CD8-positive, alpha-beta T cell (primary cell): ENCODE measurements at regions of chr12 and their contacts with region 1.

Region 1: DNA sequence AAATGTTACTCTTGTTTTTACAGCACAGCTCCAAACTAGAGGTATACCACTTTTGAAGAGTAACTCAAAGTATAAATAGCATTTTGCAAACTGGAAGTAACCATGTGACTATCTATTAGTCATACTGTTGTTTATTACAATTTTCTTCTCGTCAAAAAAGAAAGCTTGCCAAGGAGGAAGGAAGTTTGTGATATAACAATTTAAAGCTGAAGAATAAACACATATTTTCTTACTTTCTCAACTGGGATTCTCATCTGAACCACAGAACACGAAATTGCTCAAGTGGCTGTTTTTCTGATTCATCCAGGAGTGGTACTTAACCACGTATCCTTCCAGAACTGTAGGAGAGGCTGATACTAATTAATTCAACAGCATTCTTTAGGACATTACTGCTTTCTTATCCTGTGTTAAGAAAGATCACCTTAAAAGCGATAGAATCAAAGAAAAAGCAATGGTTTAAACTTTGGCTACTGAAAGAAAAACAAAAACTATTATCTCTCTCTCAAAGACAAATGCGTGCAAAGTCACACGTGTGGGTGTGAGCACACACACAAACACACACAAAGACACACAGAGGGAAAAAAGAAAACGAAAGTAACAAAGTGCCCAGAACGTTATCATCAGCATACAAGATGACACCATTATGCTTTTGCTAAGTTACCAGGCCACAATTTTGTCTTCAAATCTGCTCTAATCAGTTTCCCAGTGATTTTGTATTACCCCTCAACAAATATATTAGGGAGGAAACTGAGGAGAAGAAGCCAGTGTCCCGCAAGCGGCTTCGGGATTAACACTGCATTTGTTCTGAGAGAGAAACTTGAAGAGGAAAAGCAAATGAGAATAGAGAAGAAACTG is at the start of gene CLEC2B:
- DNase-seq: peak in 3 of 9 experiments; percentile 50 to 86 (median 71)
- ATAC-seq: peak; percentile 70
- H3K4me3 ChIP-seq: peak within 1 kb of the TSS; percentile 41 to 64
- H3K4me3 Mint-ChIP-seq: peak within 1 kb of the TSS; percentile 89
- H3K27ac ChIP-seq: peak within 1 kb of the TSS; percentile 79 to 92
- H3K27ac Mint-ChIP-seq: peak within 1 kb of the TSS; percentile 96
- H3K4me1 ChIP-seq: peaks cover 7% of the 10 kb centered on the region
- H3K4me1 Mint-ChIP-seq: peaks cover 36% of the 10 kb centered on the region
- H3K27me3 ChIP-seq: no peaks in the 10 kb centered on the region
- H3K27me3 Mint-ChIP-seq: no peaks in the 10 kb centered on the region
- CTCF ChIP-seq: no peak
- total RNA-seq, gene CLEC2B: 141 to 145 TPM

Region 2: DNA sequence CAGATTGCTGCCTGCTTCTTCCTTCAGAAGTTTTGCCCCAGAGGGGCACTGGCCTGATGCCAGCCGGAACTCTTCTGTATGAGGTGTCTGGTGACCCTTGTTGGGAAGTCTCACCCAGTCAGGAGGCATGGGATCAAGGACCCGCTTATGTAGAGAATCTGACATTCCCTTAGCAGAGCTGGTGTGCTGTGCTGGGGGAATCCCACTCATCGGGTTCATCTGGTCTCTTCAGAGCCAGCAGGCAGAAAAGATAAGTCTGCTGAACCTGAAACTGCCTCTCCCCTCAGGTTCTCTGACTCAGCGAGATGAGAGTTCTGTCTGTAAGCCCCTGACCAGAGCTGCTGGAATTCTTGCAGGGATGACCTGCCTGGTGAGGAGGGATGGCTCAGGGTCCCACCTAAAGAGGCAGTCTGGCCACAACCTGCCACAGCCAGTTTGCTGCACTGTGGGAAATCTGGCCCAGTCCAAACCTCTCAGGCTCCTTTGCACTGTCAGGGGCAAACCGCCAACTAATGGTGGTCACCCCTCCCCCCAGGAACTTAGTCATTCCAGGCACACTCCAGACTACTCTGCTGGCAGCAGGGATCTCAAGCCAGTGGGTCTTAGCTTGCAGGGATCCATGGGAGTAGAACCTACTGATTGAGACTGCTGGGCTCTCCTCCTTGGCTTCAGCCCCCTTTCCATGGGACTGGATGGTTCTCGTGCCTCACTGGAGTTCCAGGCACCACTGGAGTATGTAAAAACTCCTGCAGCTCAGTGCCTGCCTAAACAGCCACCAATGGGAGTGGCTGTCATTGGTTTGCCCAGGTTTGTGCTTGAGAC is 195.9 kb before region 1 on chr12:
- CTCF ChIA-PET with region 1: interaction called, 4 read pairs
- POLR2A ChIA-PET with region 1: interaction called, 3 read pairs
- intact Hi-C with region 1: loop called in 1 of 2 experiments (anchors 10 kb)
- DNase-seq: peak in 7 of 9 experiments; percentile 44 to 82 (median 63)
- ATAC-seq: peak; percentile 37
- H3K4me3 ChIP-seq: peak overlapping the region; percentile 50 to 68
- H3K4me3 Mint-ChIP-seq: peak overlapping the region; percentile 88
- H3K27ac ChIP-seq: peak overlapping the region; percentile 42 to 74
- H3K27ac Mint-ChIP-seq: peak overlapping the region; percentile 95
- H3K4me1 ChIP-seq: peaks cover 44% of the 10 kb centered on the region
- H3K4me1 Mint-ChIP-seq: peaks cover 76% of the 10 kb centered on the region
- H3K27me3 ChIP-seq: no peaks in the 10 kb centered on the region
- H3K27me3 Mint-ChIP-seq: no peaks in the 10 kb centered on the region
- CTCF ChIP-seq: no peak

Region 3: GRCh38 chr12:9851927-9852326 is 17.6 kb before region 1 on chr12:
- CTCF ChIA-PET with region 1: interaction called, 4 read pairs
- POLR2A ChIA-PET with region 1: interaction called, 4 read pairs
- intact Hi-C with region 1: loop called in 1 of 2 experiments (anchors 2 kb)
- DNase-seq: no peak
- ATAC-seq: no peak
- H3K4me3 ChIP-seq: no peak overlapping the region
- H3K4me3 Mint-ChIP-seq: no peak overlapping the region
- H3K27ac ChIP-seq: no peak overlapping the region
- H3K27ac Mint-ChIP-seq: no peak overlapping the region
- H3K4me1 ChIP-seq: peaks cover 11% of the 10 kb centered on the region
- H3K4me1 Mint-ChIP-seq: peaks cover 50% of the 10 kb centered on the region
- H3K27me3 ChIP-seq: no peaks in the 10 kb centered on the region
- H3K27me3 Mint-ChIP-seq: no peaks in the 10 kb centered on the region
- CTCF ChIP-seq: no peak

Region 4: GRCh38 chr12:9858135-9858534 is 11.4 kb before region 1 on chr12:
- CTCF ChIA-PET with region 1: interaction called, 4 read pairs
- POLR2A ChIA-PET with region 1: interaction called, 4 read pairs
- intact Hi-C with region 1: loop called in 1 of 2 experiments (anchors 1 kb)
- DNase-seq: no peak
- ATAC-seq: no peak
- H3K4me3 ChIP-seq: no peak overlapping the region
- H3K4me3 Mint-ChIP-seq: no peak overlapping the region
- H3K27ac ChIP-seq: no peak overlapping the region
- H3K27ac Mint-ChIP-seq: no peak overlapping the region
- H3K4me1 ChIP-seq: peaks cover 37% of the 10 kb centered on the region
- H3K4me1 Mint-ChIP-seq: peaks cover 84% of the 10 kb centered on the region
- H3K27me3 ChIP-seq: no peaks in the 10 kb centered on the region
- H3K27me3 Mint-ChIP-seq: no peaks in the 10 kb centered on the region
- CTCF ChIP-seq: no peak

Region 5: DNA sequence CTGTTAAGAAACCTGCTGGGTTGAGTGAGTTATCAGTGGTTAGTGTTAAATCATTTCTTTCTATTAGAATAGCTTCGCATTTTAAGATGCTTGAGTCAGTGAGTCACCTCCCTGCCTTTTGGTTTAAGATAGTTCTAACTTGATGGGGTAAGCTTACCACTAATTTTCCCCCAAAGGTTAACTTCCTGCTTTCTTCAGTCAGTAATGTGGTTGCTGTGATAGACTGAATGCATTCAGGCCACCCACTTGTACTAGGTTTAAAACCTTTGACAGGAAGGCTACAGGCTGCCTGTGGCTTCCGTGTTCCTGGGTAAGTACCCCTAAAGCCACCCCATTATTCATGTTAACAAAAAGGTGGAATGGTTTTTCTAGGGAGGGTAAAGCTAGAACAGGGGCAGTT is 37.3 kb after region 1 on chr12:
- CTCF ChIA-PET with region 1: interaction called, 5 read pairs
- POLR2A ChIA-PET with region 1: interaction called, 18 read pairs
- intact Hi-C with region 1: loop called (anchors 1 to 2 kb)
- DNase-seq: peak in 8 of 9 experiments; percentile 15 to 86 (median 59)
- ATAC-seq: peak; percentile 96
- H3K4me3 ChIP-seq: peak overlapping the region in 1 of 2 experiments; percentile 8
- H3K4me3 Mint-ChIP-seq: peak overlapping the region; percentile 49
- H3K27ac ChIP-seq: peak overlapping the region in 1 of 2 experiments; percentile 3
- H3K27ac Mint-ChIP-seq: peak overlapping the region; percentile 82
- H3K4me1 ChIP-seq: peaks cover 28% of the 10 kb centered on the region
- H3K4me1 Mint-ChIP-seq: peaks cover 36% of the 10 kb centered on the region
- H3K27me3 ChIP-seq: no peaks in the 10 kb centered on the region
- H3K27me3 Mint-ChIP-seq: no peaks in the 10 kb centered on the region
- CTCF ChIP-seq: no peak

Region 6: GRCh38 chr12:9925708-9926393 is 56.3 kb after region 1 on chr12:
- CTCF ChIA-PET with region 1: interaction called, 5 read pairs
- POLR2A ChIA-PET with region 1: interaction called, 3 read pairs
- intact Hi-C with region 1: loop called (anchors 2 kb)
- DNase-seq: peak in 6 of 9 experiments; percentile 5 to 74 (median 44)
- ATAC-seq: peak; percentile 59
- H3K4me3 ChIP-seq: peak overlapping the region; percentile 21 to 28
- H3K4me3 Mint-ChIP-seq: peak overlapping the region; percentile 77
- H3K27ac ChIP-seq: no peak overlapping the region
- H3K27ac Mint-ChIP-seq: peak overlapping the region; percentile 18
- H3K4me1 ChIP-seq: no peaks in the 10 kb centered on the region
- H3K4me1 Mint-ChIP-seq: peaks cover 12% of the 10 kb centered on the region
- H3K27me3 ChIP-seq: peaks cover 0 to 2% of the 10 kb centered on the region in 2 experiments
- H3K27me3 Mint-ChIP-seq: no peaks in the 10 kb centered on the region
- CTCF ChIP-seq: peak; percentile 62

Region 7: DNA sequence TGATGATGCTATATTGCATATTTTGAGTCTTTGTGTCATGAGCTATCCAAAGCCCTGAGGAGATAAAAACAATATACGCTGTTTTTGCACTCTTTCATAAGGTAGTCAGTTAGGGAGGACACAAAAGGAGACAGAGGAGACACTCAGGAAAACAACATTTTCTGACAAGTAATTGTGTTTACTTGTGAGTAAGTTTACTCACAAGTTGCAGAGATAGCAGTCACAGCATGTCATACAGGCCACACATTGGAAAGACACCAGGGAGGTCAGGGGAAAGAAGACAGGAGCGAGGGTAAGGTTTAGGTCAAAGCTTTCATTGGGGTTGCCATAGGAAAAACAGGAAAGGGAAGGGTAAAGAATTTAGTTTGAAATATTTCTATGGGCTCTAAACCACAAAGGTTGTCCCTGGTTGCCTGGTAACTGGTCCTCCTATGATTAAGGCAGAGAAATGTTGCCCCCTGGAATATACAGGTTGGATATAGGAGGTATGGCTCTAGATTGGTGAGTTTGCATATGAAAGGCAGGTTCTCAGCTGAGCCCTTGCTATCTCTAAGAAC is 335.8 kb after region 1 on chr12:
- CTCF ChIA-PET with region 1: no interaction called
- POLR2A ChIA-PET with region 1: no interaction called
- intact Hi-C with region 1: loop called in 1 of 2 experiments (anchors 5 kb)
- DNase-seq: no peak
- ATAC-seq: no peak
- H3K4me3 ChIP-seq: no peak overlapping the region
- H3K4me3 Mint-ChIP-seq: no peak overlapping the region
- H3K27ac ChIP-seq: no peak overlapping the region
- H3K27ac Mint-ChIP-seq: no peak overlapping the region
- H3K4me1 ChIP-seq: no peaks in the 10 kb centered on the region
- H3K4me1 Mint-ChIP-seq: no peaks in the 10 kb centered on the region
- H3K27me3 ChIP-seq: no peaks in the 10 kb centered on the region
- H3K27me3 Mint-ChIP-seq: no peaks in the 10 kb centered on the region
- CTCF ChIP-seq: no peak

Region 8: GRCh38 chr12:10652192-10652591 is 782.7 kb after region 1 on chr12:
- CTCF ChIA-PET with region 1: no interaction called
- POLR2A ChIA-PET with region 1: no interaction called
- intact Hi-C with region 1: no loop called
- DNase-seq: no peak
- ATAC-seq: no peak
- H3K4me3 ChIP-seq: no peak overlapping the region
- H3K4me3 Mint-ChIP-seq: no peak overlapping the region
- H3K27ac ChIP-seq: no peak overlapping the region
- H3K27ac Mint-ChIP-seq: no peak overlapping the region
- H3K4me1 ChIP-seq: no peaks in the 10 kb centered on the region
- H3K4me1 Mint-ChIP-seq: no peaks in the 10 kb centered on the region
- H3K27me3 ChIP-seq: no peaks in the 10 kb centered on the region
- H3K27me3 Mint-ChIP-seq: no peaks in the 10 kb centered on the region
- CTCF ChIP-seq: no peak